ENCODE measurements at regions of chr5 and their contacts with region 1.

Region 1: DNA sequence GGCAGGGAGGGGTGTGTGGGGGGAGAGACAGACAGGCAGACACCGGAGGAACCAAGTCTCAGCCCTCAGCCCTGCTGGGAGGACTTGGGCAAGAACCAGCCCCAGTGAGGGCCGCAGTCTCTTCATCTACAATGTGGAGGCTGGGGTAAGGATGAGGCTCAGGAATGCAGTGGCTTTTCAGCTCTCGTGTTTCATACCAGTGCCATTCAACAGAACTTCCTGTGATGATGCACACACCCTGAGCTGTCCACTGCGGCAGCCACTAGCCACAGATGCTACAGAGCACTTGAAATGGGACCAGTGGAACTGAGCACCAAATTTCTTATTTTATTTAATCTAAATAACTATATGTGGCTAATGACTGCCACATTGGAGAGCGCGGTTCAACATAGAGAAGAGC is 10.7 kb downstream of the CAMK2A start:
- DNase-seq: peak; percentile 90
- ATAC-seq: peak; percentile 97
- H3K4me3 ChIP-seq: no peak overlapping the region
- H3K27ac ChIP-seq: peak overlapping the region; percentile 71
- H3K4me1 ChIP-seq: peaks cover 10% of the 10 kb centered on the region
- H3K27me3 ChIP-seq: no peaks in the 10 kb centered on the region
- CTCF ChIP-seq: no peak
- POLR2A ChIP-seq: no peak
- RAD21 ChIP-seq: no peak

Region 2: GRCh38 chr5:150082374-150082773 is 196.5 kb before region 1 on chr5:
- CTCF ChIA-PET with region 1: no interaction called
- POLR2A ChIA-PET with region 1: no interaction called
- dilution Hi-C with region 1: no loop called
- in situ Hi-C with region 1: no loop called
- intact Hi-C with region 1: no loop called
- DNase-seq: no peak
- ATAC-seq: no peak
- H3K4me3 ChIP-seq: no peak overlapping the region
- H3K27ac ChIP-seq: no peak overlapping the region
- H3K4me1 ChIP-seq: peaks cover 4% of the 10 kb centered on the region; the same call in 1 of the 2 replicates
- H3K27me3 ChIP-seq: peaks cover 26% of the 10 kb centered on the region
- CTCF ChIP-seq: no peak
- POLR2A ChIP-seq: no peak
- RAD21 ChIP-seq: no peak

Region 3: GRCh38 chr5:150234576-150235499 is 44.1 kb before region 1 on chr5:
- CTCF ChIA-PET with region 1: no interaction called
- POLR2A ChIA-PET with region 1: no interaction called
- dilution Hi-C with region 1: no loop called
- in situ Hi-C with region 1: no loop called
- intact Hi-C with region 1: no loop called
- DNase-seq: no peak
- ATAC-seq: no peak; the same call in 1 of the 2 replicates
- H3K4me3 ChIP-seq: no peak overlapping the region
- H3K27ac ChIP-seq: no peak overlapping the region
- H3K4me1 ChIP-seq: no peaks in the 10 kb centered on the region
- H3K27me3 ChIP-seq: no peaks in the 10 kb centered on the region; the same call in 1 of the 2 replicates
- CTCF ChIP-seq: no peak
- POLR2A ChIP-seq: no peak
- RAD21 ChIP-seq: no peak

Region 4: GRCh38 chr5:150302301-150303069 is 23.6 kb after region 1 on chr5 and contains the start of gene ARSI:
- CTCF ChIA-PET with region 1: no interaction called
- POLR2A ChIA-PET with region 1: no interaction called
- dilution Hi-C with region 1: no loop called
- in situ Hi-C with region 1: no loop called
- intact Hi-C with region 1: loop called (anchors 2 kb)
- DNase-seq: no peak
- ATAC-seq: peak; percentile 68
- H3K4me3 ChIP-seq: peak within 1 kb of the TSS; percentile 38
- H3K27ac ChIP-seq: peak within 1 kb of the TSS; percentile 93
- H3K4me1 ChIP-seq: peaks cover 45% of the 10 kb centered on the region
- H3K27me3 ChIP-seq: no peaks in the 10 kb centered on the region
- CTCF ChIP-seq: peak; percentile 53
- POLR2A ChIP-seq: no peak
- RAD21 ChIP-seq: peak; percentile 30
- total RNA-seq, gene ARSI: 15.0 and 15.2 TPM in 2 replicates

Region 5: DNA sequence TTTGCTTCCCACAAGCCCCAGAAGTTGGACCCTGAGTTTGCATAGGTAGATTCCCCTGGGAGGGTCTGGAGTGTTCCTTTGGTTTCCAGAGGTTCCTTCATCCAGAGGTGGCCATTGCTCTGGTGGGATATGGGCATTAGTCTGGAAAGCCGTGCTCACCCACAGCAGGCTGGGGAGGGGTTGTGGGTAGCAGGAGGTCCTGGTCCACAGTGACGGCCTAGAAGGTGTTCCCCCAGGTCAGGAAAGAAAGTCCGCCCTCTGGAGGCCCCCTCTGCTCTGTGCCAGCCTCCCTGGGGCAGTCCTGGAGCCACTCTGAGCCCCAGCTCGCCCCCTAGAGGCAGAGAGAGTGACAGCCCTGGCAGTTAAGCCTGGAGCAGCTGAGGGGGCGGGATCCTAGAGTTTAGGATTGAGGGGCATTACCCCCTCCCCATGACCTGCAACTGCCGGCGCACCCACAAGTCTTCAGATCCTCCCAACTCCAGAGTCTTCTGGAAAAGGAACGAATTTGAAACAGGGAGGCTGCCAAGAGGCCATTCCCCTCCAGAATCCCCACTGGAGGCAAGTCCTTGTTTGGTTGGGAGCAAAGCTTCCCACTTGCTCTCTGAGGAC is 265.8 kb after region 1 on chr5:
- CTCF ChIA-PET with region 1: no interaction called
- POLR2A ChIA-PET with region 1: no interaction called
- dilution Hi-C with region 1: no loop called
- in situ Hi-C with region 1: no loop called
- intact Hi-C with region 1: no loop called
- DNase-seq: peak; percentile 31
- ATAC-seq: peak; percentile 63
- H3K4me3 ChIP-seq: no peak overlapping the region
- H3K27ac ChIP-seq: peak overlapping the region; percentile 28; the same call in 1 of the 2 replicates
- H3K4me1 ChIP-seq: peaks cover 31% of the 10 kb centered on the region
- H3K27me3 ChIP-seq: no peaks in the 10 kb centered on the region
- CTCF ChIP-seq: peak; percentile 78
- POLR2A ChIP-seq: no peak
- RAD21 ChIP-seq: peak; percentile 59